ENCODE measurements at regions of chr7 and their contacts with region 1.

Region 1: GRCh38 chr7:3909128-3909527 is 608.1 kb downstream of the SDK1 start:
- DNase-seq: no peak
- H3K4me3 ChIP-seq: no peak overlapping the region
- H3K27ac ChIP-seq: no peak overlapping the region
- H3K4me1 ChIP-seq: no peaks in the 10 kb centered on the region
- H3K27me3 ChIP-seq: no peaks in the 10 kb centered on the region
- CTCF ChIP-seq: no peak
- POLR2A ChIP-seq: no peak

Region 2: GRCh38 chr7:2732959-2733584 is 1176.1 kb before region 1 on chr7:
- intact Hi-C with region 1: loop called (anchors 5 kb)
- DNase-seq: peak in 1 of 2 donors; percentile 96
- H3K4me3 ChIP-seq: no peak overlapping the region
- H3K27ac ChIP-seq: peak overlapping the region; percentile 73
- H3K4me1 ChIP-seq: peaks cover 30% of the 10 kb centered on the region
- H3K27me3 ChIP-seq: no peaks in the 10 kb centered on the region
- CTCF ChIP-seq: no peak
- POLR2A ChIP-seq: no peak